A549 (cell line): ENCODE measurements at regions of chr2 and their contacts with region 1.

Region 1: DNA sequence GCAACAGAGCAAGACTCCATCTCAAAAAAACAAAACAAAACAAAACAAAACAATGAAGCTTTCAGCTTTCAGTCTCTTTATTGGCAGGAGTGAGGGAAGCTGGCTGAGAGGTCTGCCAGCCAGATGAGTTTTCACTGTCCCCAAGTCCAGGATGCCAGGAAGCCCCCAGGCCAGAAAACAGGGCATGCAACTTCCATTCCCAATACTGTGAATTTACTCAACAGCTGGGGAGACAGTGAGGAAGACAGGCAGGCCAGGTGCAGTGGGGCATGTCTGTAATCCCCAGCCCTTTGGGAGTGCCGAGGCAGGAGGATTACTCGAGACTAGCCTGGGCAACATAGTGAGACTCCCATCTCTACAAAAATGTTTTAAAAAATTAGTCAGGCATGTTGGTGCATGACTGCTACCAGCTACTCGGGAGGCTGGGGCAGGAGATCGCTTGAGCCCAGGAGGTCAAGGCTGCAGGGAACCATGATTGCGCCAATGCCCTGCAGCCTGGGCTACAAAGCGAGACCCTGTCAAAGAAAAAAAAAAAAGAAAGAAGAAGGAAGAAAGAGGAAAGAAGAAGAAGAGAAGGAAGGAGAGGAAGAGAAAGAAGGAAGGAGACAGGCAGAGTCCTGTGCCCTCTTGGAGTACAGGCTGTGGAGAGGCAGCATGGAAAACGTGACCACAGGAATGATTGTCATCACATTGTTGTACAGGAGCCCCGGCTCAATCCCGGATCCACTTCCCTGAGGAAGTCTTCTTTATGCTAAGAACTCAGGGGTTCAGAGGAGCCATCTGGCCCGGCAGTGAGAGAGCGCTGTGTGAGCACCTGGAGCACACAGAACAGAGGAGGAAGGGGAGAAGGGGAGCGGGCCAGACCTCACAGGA is 29.2 kb upstream of the POMC start:
- DNase-seq: no peak
- ATAC-seq: no peak
- H3K4me3 ChIP-seq: no peak overlapping the region
- H3K27ac ChIP-seq: no peak overlapping the region
- H3K4me1 ChIP-seq: no peaks in the 10 kb centered on the region
- CTCF ChIP-seq: no peak
- EP300 ChIP-seq: no peak
- POLR2A ChIP-seq: no peak
- RAD21 ChIP-seq: no peak

Region 2: GRCh38 chr2:24409700-24410556 is 787.6 kb before region 1 on chr2:
- CTCF ChIA-PET with region 1: interaction called, 13 read pairs
- POLR2A ChIA-PET with region 1: no interaction called
- DNase-seq: peak; percentile 81 to 83
- ATAC-seq: peak; percentile 96 to 97
- H3K4me3 ChIP-seq: no peak overlapping the region
- H3K27ac ChIP-seq: no peak overlapping the region
- H3K4me1 ChIP-seq: peaks cover 10% of the 10 kb centered on the region; the same call in 1 of the 3 replicates
- CTCF ChIP-seq: peak; percentile 98
- EP300 ChIP-seq: no peak
- POLR2A ChIP-seq: no peak
- RAD21 ChIP-seq: peak; percentile 97

Region 3: GRCh38 chr2:25131567-25132298 is 65.8 kb before region 1 on chr2:
- CTCF ChIA-PET with region 1: interaction called, 29 read pairs
- POLR2A ChIA-PET with region 1: no interaction called
- DNase-seq: no peak
- ATAC-seq: no peak
- H3K4me3 ChIP-seq: no peak overlapping the region
- H3K27ac ChIP-seq: no peak overlapping the region
- H3K4me1 ChIP-seq: peaks cover 4% of the 10 kb centered on the region; the same call in 2 of the 3 replicates
- CTCF ChIP-seq: no peak
- EP300 ChIP-seq: no peak
- POLR2A ChIP-seq: no peak
- RAD21 ChIP-seq: no peak

Region 4: GRCh38 chr2:25151718-25152117 is 45.9 kb before region 1 on chr2:
- CTCF ChIA-PET with region 1: interaction called, 19 read pairs
- POLR2A ChIA-PET with region 1: no interaction called
- DNase-seq: no peak
- ATAC-seq: 0 out of 6 replicates have a peak, but pooled peaks of 1 of the 2 experiments have one; percentile 14
- H3K4me3 ChIP-seq: no peak overlapping the region
- H3K27ac ChIP-seq: no peak overlapping the region
- H3K4me1 ChIP-seq: no peaks in the 10 kb centered on the region
- CTCF ChIP-seq: no peak
- EP300 ChIP-seq: no peak
- POLR2A ChIP-seq: no peak
- RAD21 ChIP-seq: no peak

Region 5: GRCh38 chr2:25177211-25177611 is 20.4 kb before region 1 on chr2:
- CTCF ChIA-PET with region 1: interaction called, 21 read pairs
- POLR2A ChIA-PET with region 1: no interaction called
- DNase-seq: no peak
- ATAC-seq: no peak
- H3K4me3 ChIP-seq: no peak overlapping the region
- H3K27ac ChIP-seq: no peak overlapping the region
- H3K4me1 ChIP-seq: no peaks in the 10 kb centered on the region
- CTCF ChIP-seq: no peak
- EP300 ChIP-seq: no peak
- POLR2A ChIP-seq: no peak
- RAD21 ChIP-seq: no peak

Region 6: GRCh38 chr2:25222477-25223121 is 25.0 kb after region 1 on chr2:
- CTCF ChIA-PET with region 1: interaction called, 24 read pairs
- POLR2A ChIA-PET with region 1: no interaction called
- DNase-seq: no peak
- ATAC-seq: no peak; a peak in 2 of 6 replicates
- H3K4me3 ChIP-seq: no peak overlapping the region
- H3K27ac ChIP-seq: no peak overlapping the region
- H3K4me1 ChIP-seq: no peaks in the 10 kb centered on the region
- CTCF ChIP-seq: no peak
- EP300 ChIP-seq: no peak
- POLR2A ChIP-seq: no peak
- RAD21 ChIP-seq: no peak